ENCODE measurements at regions of chr3 and their contacts with region 1.

Region 1: DNA sequence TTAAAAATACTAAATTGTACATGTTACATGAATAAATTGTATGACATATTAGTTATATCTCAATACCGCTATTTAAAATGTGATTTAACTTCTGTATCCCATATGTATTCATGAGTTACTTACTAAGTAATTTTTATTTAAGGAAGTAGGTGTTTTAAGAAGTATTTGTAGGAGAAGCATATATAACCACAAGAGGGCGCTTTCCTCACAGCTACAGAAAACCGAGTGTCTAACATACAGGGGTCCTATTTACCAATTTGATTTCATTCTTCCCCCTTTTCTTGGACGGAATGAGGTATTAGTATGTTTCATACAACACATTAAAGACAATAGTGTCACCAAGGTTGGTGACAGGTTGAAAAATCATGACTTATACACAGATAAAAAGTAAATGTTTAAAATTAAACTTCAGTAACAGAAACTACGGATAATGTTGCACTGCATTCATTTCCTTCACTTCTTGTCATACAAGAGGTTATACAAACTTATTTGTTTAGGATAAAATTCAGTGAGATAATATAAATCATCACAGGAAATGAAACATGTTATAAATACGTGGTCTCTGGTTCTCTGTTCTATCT is 253.6 kb downstream of the MAGI1 start:
- DNase-seq: no peak
- H3K4me3 ChIP-seq: no peak overlapping the region
- H3K27ac ChIP-seq: no peak overlapping the region
- H3K4me1 ChIP-seq: peaks cover 28% of the 10 kb centered on the region
- H3K27me3 ChIP-seq: no peaks in the 10 kb centered on the region
- CTCF ChIP-seq: peak; percentile 80

Region 2: DNA sequence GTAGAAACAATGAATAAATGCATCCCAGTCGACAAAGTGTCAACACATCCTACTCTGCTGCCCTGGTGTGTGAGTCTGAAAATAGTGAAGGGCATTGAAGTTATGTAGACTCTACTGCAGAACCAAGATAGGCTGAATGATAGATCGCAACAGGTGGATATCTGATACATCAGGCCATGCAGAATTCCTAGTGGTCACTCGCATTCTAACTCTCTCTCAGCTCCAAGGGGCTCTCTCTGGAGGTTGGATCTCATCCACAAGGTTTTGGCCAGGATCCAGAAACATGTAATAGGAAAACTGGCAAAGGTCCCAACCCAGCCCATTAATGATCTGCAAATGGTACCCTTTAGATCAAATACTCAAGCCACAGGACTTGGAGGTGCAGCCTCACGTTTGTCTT is 260.6 kb before region 1 on chr3:
- intact Hi-C with region 1: no loop called
- DNase-seq: no peak
- H3K4me3 ChIP-seq: no peak overlapping the region
- H3K27ac ChIP-seq: no peak overlapping the region
- H3K4me1 ChIP-seq: peaks cover 40% of the 10 kb centered on the region
- H3K27me3 ChIP-seq: no peaks in the 10 kb centered on the region
- CTCF ChIP-seq: no peak

Region 3: DNA sequence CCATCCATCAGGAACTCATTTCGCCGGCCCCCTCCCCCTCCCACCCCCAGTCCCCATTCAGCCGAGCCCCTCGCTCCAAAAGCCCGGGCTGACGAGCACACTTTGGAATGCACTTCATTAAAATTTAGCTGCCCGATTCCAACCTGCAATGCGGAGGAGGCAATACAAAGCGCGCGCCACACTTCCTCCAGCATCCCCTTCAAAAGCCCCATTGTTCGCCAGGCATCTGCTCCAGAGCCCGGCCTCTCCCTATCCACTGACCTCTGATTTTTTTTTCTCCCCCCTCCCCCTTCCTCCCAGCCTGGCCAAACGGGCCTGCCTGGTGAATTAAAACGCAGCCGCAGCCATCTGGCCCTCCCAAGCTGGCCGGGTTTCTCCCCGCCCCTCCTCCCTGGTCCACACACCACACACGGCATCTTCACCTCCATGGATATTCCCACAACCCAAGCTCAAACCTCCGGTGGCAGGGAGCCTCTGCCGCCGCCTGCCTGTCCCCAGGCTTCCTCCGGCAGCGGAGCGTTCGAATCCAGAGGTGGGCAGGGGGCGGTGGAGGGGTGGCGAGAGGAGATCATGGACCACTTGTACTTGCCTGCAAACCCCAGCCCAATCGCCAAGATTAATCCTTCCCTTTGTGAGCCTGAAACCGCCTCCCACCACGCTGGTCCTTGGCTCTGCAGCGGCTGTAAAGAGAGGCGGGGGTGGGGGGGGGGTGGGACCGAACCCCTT is 187.8 kb before region 1 on chr3:
- intact Hi-C with region 1: no loop called
- DNase-seq: no peak
- H3K4me3 ChIP-seq: peak overlapping the region; percentile 53
- H3K27ac ChIP-seq: no peak overlapping the region
- H3K4me1 ChIP-seq: peaks cover 32% of the 10 kb centered on the region
- H3K27me3 ChIP-seq: no peaks in the 10 kb centered on the region
- CTCF ChIP-seq: no peak

Region 4: GRCh38 chr3:65914740-65915367 is 129.7 kb after region 1 on chr3:
- intact Hi-C with region 1: loop called (anchors 10 kb)
- DNase-seq: no peak
- H3K4me3 ChIP-seq: no peak overlapping the region
- H3K27ac ChIP-seq: no peak overlapping the region
- H3K4me1 ChIP-seq: peaks cover 36% of the 10 kb centered on the region
- H3K27me3 ChIP-seq: no peaks in the 10 kb centered on the region
- CTCF ChIP-seq: peak; percentile 18

Region 5: DNA sequence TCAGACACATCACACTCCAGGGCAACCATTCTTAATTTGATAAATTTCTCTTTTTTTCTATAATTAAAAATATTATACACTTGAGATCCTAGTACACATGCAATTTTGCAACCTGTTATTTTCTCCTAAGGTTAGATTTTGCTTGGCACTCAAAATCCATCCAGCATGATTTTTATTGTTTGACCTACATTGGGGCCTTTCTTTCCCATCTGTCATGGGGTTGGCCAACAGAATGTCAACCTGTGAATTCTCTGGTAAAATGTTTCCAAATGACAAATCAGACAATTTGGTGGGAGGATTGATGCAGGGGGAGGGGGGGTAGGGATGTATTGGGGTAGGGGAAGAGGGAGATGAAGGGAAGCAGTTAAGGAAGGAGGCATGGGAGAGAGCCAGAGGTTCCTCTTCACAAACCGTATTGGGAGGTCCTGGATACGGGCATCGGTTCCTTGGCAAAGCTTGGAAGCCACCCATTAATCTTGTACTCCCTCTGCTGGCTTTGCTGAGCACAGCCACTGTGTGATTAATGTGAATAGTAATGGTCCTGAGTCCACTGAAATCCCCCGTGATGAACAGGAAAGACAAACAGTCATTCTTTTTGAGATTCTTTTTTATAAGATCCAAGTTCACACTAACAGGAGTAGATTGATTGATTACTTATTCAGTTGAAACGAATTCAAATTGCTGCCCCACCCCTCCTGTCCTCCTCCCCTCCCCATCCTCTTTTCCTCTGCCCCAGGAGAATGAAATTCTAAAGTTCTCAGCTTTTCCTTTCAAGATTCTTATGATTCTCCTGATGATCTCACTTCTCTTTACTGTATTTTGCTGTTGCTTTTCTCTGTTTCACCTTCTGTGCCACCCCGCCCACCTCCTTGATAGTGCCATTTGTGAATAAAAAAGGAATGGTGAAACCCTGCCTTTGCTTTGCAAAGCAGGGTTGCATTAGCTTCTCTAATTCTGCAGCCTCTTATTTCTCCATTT is 353.5 kb after region 1 on chr3:
- intact Hi-C with region 1: loop called (anchors 5 kb)
- DNase-seq: peak; percentile 28
- H3K4me3 ChIP-seq: no peak overlapping the region
- H3K27ac ChIP-seq: peak overlapping the region; percentile 47
- H3K4me1 ChIP-seq: peaks cover 18% of the 10 kb centered on the region
- H3K27me3 ChIP-seq: no peaks in the 10 kb centered on the region
- CTCF ChIP-seq: peak; percentile 88